ENCODE measurements at regions of chr17 and their contacts with region 1.

Region 1: DNA sequence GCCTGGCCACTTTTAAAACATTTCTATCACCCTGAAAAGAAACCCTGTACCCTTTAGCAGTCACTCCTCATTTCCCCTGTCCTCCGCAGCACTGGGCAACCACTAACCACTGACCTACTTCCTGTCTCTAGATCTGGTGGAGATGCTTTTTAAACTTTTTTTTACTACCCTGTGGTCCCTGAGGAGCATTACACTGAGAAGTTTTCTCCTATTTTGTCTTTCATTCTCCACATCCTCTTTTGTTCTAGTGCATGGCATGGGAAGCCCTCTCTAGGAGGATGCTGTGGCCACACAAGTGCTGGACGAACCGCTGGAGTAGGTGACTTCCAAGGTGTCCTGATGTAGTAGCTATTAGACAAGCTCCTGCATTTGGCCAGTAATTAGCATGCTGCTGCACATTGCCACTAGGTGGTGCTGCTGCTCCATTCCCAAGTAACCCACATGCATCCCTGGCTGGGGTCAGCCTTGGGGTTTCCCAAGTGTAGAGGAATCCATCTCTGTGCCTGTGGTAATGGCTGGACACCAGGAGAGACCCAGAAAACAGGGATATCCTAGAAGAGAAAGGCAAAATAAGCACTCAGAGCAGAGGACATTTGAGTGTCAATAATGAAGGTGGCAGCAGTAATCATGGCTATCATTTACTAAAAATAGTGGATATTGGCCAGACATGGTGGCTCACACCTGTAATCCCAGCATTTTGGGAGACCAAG is 143.8 kb upstream of the CRHR1 start:
- DNase-seq: peak; percentile 75
- H3K4me3 ChIP-seq: no peak overlapping the region
- H3K27ac ChIP-seq: no peak overlapping the region
- H3K4me1 ChIP-seq: no peaks in the 10 kb centered on the region
- H3K27me3 ChIP-seq: peaks cover 0 to 1% of the 10 kb centered on the region in 2 experiments
- CTCF ChIP-seq: peak; percentile 92 to 97
- POLR2A ChIP-seq: no peak

Region 2: GRCh38 chr17:45628019-45628418 is 12.3 kb before region 1 on chr17:
- CTCF ChIA-PET with region 1: interaction called, 18 read pairs
- POLR2A ChIA-PET with region 1: no interaction called
- dilution Hi-C with region 1: no loop called
- intact Hi-C with region 1: no loop called
- DNase-seq: no peak
- H3K4me3 ChIP-seq: no peak overlapping the region
- H3K27ac ChIP-seq: no peak overlapping the region
- H3K4me1 ChIP-seq: no peaks in the 10 kb centered on the region
- H3K27me3 ChIP-seq: no peaks in the 10 kb centered on the region
- CTCF ChIP-seq: no peak
- POLR2A ChIP-seq: no peak

Region 3: GRCh38 chr17:45820052-45820780 is 179.9 kb after region 1 on chr17:
- CTCF ChIA-PET with region 1: interaction called, 17 read pairs
- POLR2A ChIA-PET with region 1: no interaction called
- dilution Hi-C with region 1: no loop called
- intact Hi-C with region 1: no loop called
- DNase-seq: no peak
- H3K4me3 ChIP-seq: no peak overlapping the region
- H3K27ac ChIP-seq: no peak overlapping the region
- H3K4me1 ChIP-seq: no peaks in the 10 kb centered on the region
- H3K27me3 ChIP-seq: no peaks in the 10 kb centered on the region
- CTCF ChIP-seq: no peak
- POLR2A ChIP-seq: no peak